Activated CD4-positive, alpha-beta T cell treated with anti-CD3 and anti-CD28 coated beads for 36 hours (primary cell): ENCODE measurements at regions of chr21 and their contacts with region 1.

Region 1: DNA sequence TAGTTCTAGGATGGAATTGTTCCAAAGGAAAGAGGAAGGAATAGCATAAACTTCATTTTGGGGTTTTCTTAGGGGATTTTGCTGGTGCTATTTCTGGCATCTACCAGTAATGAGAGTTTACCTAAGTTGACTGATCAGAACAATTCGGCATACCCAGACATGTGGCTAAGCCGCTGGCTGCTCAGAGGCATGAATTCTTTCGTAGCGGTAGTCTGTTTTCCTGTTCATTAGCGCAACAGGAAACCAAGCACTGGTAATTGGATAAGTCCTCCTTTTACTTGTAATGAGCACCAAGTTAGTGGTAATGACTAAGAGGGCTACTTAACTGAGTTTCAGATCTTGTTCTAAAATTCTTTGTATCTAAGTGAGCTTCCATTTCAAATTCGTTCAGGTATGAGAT is 38.6 kb downstream of the C21orf91 start:
- DNase-seq: peak; percentile 51
- ATAC-seq: peak; percentile 20
- H3K4me3 Mint-ChIP-seq: peak overlapping the region; percentile 3
- H3K27ac Mint-ChIP-seq: peak overlapping the region; percentile 73
- H3K4me1 Mint-ChIP-seq: peaks cover 87% of the 10 kb centered on the region
- H3K27me3 Mint-ChIP-seq: no peaks in the 10 kb centered on the region

Region 2: DNA sequence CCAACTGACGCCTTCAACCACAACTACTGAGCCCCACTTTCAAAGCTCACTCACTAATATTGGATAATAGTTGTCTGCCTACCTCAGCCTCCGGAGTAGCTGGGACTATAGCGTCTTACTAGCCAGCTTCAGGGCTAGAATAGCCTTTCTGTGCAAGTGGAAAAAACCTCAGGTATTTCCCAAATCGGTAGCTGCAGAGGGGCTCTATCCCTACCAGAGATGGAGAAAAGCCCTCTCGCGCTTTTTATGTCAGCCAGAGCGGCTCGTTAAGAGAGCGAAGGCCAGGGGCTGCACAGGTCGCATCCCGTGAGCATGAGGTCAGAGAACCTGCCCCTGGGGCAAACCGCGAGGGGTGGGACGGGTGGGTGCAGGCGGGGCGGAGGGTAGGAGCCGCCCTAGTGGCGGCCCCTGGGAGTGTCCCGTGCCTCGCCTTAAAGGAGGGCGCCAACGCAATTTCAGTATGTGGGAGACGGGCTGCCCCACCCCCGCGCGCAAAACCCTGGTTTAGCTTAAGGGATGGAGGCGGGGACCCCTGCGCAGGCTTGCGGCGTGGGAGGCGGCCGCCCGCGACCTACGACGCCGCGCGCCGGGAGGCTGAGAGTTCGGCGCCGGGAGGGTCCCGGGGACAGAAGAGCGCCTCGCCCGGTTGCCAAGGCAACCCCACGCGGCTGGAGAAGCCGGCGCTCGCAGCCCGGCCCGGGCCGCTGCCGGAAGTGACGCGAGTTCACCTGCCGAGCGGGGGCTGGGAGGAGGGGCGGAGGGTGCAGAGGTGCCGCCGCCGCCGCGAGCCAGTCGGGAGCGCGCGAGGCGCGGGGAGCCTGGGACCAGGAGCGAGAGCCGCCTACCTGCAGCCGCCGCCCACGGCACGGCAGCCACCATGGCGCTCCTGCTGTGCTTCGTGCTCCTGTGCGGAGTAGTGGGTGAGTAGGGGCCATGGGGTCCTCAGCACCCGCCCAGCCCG is 268.0 kb before region 1 on chr21 and contains the start of gene CXADR:
- CTCF ChIA-PET with region 1: no interaction called
- POLR2A ChIA-PET with region 1: no interaction called
- intact Hi-C with region 1: loop called in 1 of 2 experiments (anchors 10 kb)
- DNase-seq: peak; percentile 88
- ATAC-seq: peak; percentile 94
- H3K4me3 Mint-ChIP-seq: peak within 1 kb of the TSS; percentile 81
- H3K27ac Mint-ChIP-seq: peak within 1 kb of the TSS; percentile 62
- H3K4me1 Mint-ChIP-seq: peaks cover 18% of the 10 kb centered on the region
- H3K27me3 Mint-ChIP-seq: peaks cover 24% of the 10 kb centered on the region
- total RNA-seq, gene CXADR: 0.30 to 0.91 TPM

Region 3: DNA sequence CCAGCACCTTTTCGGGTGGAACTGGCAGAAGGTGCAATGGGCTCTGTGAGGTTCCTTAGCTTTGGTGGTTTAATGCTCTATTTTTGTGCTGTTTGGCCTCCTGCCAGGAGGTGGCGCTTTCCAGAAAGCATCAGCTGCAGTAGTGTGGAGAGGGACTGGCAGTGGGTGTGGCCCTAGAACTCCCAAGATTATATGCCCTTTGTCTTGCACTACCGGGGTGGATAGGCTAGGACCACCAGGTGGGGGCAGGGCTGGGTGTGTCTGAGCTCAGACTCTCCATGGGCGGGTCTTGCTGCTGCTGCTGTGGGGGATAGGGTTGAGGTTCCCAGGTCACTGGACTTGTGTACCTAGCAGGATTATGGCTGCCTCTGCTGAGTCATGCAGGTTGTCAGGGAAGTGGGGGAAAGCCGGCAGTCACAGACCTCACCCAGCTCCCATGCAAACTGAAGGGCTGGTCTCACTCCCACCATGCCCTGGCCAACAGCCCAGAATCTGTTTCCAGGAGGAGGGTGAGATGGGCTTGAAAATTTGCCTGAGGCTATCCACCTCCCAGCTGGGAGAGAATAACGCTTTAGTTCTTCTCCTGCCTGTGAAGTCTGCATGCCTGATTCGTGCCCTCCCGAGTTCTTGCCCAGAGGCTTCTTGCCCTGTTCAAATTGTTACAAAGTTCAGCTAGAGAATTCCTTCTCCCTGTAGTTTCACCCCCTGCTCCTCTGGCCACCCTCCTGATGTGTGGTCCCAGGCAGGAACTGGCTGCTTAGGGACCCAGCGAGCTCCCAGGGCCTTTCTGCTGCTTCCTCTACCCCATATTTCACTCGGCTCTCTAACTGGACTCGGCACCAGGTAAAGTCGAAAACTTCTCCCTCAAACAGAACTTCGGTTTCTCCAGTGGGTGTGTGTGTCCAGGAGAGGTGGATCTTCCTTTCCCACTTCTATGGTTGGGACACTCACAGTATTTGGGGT is 91.3 kb before region 1 on chr21:
- CTCF ChIA-PET with region 1: interaction called, 10 read pairs
- POLR2A ChIA-PET with region 1: no interaction called
- intact Hi-C with region 1: loop called in 1 of 2 experiments (anchors 5 kb)
- DNase-seq: peak; percentile 64
- ATAC-seq: peak; percentile 26
- H3K4me3 Mint-ChIP-seq: no peak overlapping the region
- H3K27ac Mint-ChIP-seq: no peak overlapping the region
- H3K4me1 Mint-ChIP-seq: peaks cover 35% of the 10 kb centered on the region
- H3K27me3 Mint-ChIP-seq: peaks cover 2% of the 10 kb centered on the region

Region 4: DNA sequence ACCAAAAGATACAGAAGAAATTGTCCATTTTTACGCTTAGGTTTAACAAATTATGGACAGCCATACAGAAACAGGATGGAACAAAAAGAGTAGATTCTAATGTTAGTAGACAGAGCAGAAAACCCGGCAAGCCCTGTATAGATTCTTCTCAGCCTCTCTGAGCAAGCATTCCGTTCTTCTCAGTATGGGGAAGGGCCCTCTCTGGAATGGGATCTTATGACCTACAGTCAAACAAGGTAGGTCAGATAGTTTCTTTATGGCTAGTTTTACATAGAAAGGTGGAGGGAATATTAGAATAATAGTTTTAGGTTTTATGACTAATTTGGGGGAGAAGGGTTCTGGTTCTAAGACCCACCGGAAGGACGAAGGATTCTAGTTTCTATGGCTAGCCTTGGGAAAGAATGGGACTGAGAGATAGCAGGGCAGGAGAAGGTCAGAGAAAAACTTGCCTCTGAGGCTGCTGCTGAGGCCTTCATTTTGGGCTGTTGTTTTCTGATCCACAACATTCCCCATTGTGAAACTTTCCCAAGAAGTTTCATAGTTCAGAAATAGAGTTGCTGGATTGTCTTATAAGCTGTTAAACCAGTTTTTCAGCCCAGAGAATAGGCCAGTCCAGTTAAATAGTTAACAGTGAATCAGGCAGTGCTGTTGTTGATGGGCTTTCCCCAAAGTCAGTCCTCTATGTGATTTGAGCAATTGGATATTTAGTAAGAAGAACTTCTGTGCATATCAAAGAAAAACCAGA is 38.6 kb before region 1 on chr21:
- CTCF ChIA-PET with region 1: interaction called, 3 read pairs
- POLR2A ChIA-PET with region 1: interaction called, 3 read pairs
- intact Hi-C with region 1: loop called in 1 of 2 experiments (anchors 5 kb)
- DNase-seq: no peak
- ATAC-seq: no peak
- H3K4me3 Mint-ChIP-seq: no peak overlapping the region
- H3K27ac Mint-ChIP-seq: no peak overlapping the region
- H3K4me1 Mint-ChIP-seq: peaks cover 18% of the 10 kb centered on the region
- H3K27me3 Mint-ChIP-seq: no peaks in the 10 kb centered on the region

Region 5: DNA sequence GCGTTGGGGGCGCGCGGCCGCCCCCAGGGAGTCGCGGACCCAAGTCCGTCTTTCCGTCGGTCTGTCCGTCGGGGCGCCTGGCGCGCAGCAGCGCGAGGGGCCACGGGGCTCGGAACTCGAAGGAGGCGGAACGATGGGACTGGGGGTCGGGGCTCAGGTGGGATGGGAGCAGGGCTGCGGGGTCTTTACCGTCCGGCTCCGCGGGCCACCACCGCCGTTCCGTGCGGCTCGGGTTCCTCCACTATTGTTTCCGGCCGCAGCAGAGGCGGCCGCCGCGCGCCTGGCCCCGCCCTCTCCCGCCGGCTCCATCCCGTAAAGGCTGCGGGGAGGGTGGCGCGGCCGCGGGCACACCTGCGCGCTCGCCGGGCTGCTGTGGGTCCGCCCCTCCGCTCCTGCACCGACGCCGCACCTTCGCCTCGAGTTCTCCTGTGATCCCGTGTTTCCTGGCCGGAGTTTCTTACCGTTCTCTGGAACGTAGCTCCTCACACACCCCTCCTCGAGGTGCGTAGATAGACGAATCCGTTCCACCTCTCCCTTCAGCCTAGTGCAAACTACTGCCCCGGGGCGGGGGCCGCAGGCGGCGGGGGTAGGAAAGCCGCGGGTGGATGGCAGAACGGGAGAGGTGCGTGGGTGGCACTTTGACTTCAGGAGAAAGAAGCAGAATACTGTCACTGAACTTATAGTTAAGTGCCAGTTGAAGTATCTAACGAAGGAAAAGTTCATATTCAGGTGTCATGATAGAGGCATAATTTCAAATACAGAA is 38.8 kb after region 1 on chr21 and contains the start of gene C21orf91:
- CTCF ChIA-PET with region 1: interaction called, 4 read pairs
- POLR2A ChIA-PET with region 1: interaction called, 4 read pairs
- intact Hi-C with region 1: loop called (anchors 1 kb)
- DNase-seq: peak; percentile 93
- ATAC-seq: peak; percentile 89
- H3K4me3 Mint-ChIP-seq: peak within 1 kb of the TSS; percentile 91
- H3K27ac Mint-ChIP-seq: peak within 1 kb of the TSS; percentile 98
- H3K4me1 Mint-ChIP-seq: peaks cover 39% of the 10 kb centered on the region
- H3K27me3 Mint-ChIP-seq: no peaks in the 10 kb centered on the region
- total RNA-seq, gene C21orf91: 20.8 to 22.9 TPM

Region 6: DNA sequence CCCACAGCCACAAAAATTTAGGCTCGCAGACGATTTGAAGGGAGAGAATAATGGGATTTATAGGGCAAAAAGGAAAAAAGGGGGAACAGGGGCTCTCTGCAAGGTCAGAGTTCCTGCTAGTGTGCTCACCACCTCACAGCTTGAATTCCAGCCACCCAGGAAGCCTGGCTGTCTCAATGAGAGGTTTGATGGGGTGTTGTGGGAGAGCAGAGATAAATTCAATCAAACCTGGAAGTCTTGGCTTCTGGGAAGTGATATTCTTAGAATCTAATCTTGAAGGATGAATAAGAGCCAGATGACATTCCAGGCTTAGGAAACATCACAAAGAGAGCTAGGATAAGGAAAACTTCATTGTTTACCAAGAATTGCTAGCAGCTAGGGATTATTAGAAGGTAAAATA is 86.1 kb after region 1 on chr21:
- CTCF ChIA-PET with region 1: no interaction called
- POLR2A ChIA-PET with region 1: no interaction called
- intact Hi-C with region 1: no loop called
- DNase-seq: no peak
- ATAC-seq: no peak
- H3K4me3 Mint-ChIP-seq: no peak overlapping the region
- H3K27ac Mint-ChIP-seq: no peak overlapping the region
- H3K4me1 Mint-ChIP-seq: no peaks in the 10 kb centered on the region
- H3K27me3 Mint-ChIP-seq: no peaks in the 10 kb centered on the region